Activated CD4-positive, alpha-beta memory T cell treated with anti-CD3 and anti-CD28 coated beads for 36 hours (primary cell): ENCODE measurements at regions of chr5 and their contacts with region 1.

Region 1: GRCh38 chr5:176647030-176647866 is at the start of gene TSPAN17:
- DNase-seq: peak; percentile 100
- H3K4me3 Mint-ChIP-seq: peak within 1 kb of the TSS; percentile 86
- H3K27ac Mint-ChIP-seq: peak within 1 kb of the TSS; percentile 85
- H3K4me1 Mint-ChIP-seq: peaks cover 48% of the 10 kb centered on the region
- H3K27me3 Mint-ChIP-seq: no peaks in the 10 kb centered on the region
- total RNA-seq, gene TSPAN17: 25.2 to 25.3 TPM

Region 2: DNA sequence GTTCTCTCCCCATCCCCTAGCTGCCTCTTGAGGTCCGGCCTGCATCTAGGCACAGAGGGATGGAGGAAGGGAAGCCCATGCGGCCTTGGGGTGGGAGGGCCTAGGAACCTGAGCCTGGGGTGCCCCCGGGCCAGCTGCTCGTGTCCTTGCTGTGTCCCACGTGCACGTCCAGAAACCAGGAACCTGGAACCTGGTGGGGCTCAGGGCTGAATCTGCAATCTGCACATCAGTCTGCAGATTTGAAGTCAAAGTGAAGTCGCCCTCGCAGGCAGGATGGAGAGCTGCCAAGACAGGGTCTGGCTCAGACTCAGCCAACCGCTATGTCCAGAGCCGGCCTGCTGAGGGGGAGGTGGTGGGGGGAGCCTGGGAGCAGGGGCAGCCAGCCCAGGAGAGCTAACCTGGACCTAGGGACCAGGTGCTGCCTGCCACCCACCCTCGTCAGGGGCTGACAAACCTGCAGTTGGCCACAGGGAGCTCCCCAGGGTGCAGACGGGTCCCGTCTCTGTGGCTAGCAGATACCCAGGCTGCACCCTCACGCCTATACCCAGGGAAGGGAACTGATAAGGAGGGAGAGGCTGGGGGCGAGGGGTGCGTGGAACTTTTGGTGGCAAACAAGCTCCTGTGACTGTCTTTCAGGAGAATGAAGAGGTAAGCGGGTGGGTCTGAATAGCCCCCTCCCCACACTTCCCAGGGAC is 512.6 kb before region 1 on chr5:
- CTCF ChIA-PET with region 1: no interaction called
- POLR2A ChIA-PET with region 1: no interaction called
- intact Hi-C with region 1: no loop called
- DNase-seq: no peak
- H3K4me3 Mint-ChIP-seq: no peak overlapping the region
- H3K27ac Mint-ChIP-seq: no peak overlapping the region
- H3K4me1 Mint-ChIP-seq: peaks cover 18% of the 10 kb centered on the region
- H3K27me3 Mint-ChIP-seq: peaks cover 10% of the 10 kb centered on the region

Region 3: DNA sequence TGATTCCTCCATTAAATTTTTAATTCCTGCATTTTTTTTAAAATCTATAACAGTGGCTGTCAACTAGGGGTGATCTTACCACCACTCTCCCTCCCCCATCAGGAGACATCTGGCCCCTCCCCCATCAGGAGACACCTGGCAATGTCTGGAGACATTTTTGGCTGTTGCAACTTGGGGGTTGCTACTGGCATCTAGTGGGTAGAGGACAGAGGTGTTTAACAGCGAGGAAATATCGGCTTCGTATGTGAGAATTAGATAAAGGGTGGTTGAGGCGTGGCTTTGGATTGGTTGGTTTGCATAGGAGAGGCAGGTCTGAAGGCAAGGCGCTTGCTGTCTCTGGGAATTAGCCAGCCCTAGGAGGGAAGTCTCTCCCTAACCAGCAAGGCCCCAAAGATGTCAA is 87.6 kb before region 1 on chr5:
- CTCF ChIA-PET with region 1: no interaction called
- POLR2A ChIA-PET with region 1: no interaction called
- intact Hi-C with region 1: no loop called
- DNase-seq: no peak
- H3K4me3 Mint-ChIP-seq: no peak overlapping the region
- H3K27ac Mint-ChIP-seq: no peak overlapping the region
- H3K4me1 Mint-ChIP-seq: peaks cover 44% of the 10 kb centered on the region
- H3K27me3 Mint-ChIP-seq: peaks cover 1% of the 10 kb centered on the region

Region 4: GRCh38 chr5:176596689-176597416 is 50.4 kb before region 1 on chr5:
- CTCF ChIA-PET with region 1: interaction called, 3 read pairs
- POLR2A ChIA-PET with region 1: no interaction called
- intact Hi-C with region 1: loop called (anchors 5 kb)
- DNase-seq: peak; percentile 74
- H3K4me3 Mint-ChIP-seq: peak overlapping the region; percentile 56
- H3K27ac Mint-ChIP-seq: peak overlapping the region; percentile 49
- H3K4me1 Mint-ChIP-seq: peaks cover 10% of the 10 kb centered on the region
- H3K27me3 Mint-ChIP-seq: no peaks in the 10 kb centered on the region